PC-3 (cell line): ENCODE measurements at regions of chr20 and their contacts with region 1.

Region 1: GRCh38 chr20:5658912-5659345 is 91.3 kb upstream of the SHLD1 start:
- DNase-seq: peak; percentile 12
- ATAC-seq: no peak
- H3K4me3 ChIP-seq: no peak overlapping the region
- H3K27ac ChIP-seq: no peak overlapping the region
- H3K4me1 ChIP-seq: peaks cover 36% of the 10 kb centered on the region
- H3K27me3 ChIP-seq: no peaks in the 10 kb centered on the region
- CTCF ChIP-seq: no peak

Region 2: GRCh38 chr20:5630071-5630470 is 28.9 kb before region 1 on chr20:
- CTCF ChIA-PET with region 1: no interaction called
- POLR2A ChIA-PET with region 1: interaction called, 13 read pairs
- intact Hi-C with region 1: no loop called
- DNase-seq: no peak
- ATAC-seq: no peak
- H3K4me3 ChIP-seq: no peak overlapping the region
- H3K27ac ChIP-seq: no peak overlapping the region
- H3K4me1 ChIP-seq: peaks cover 9% of the 10 kb centered on the region; the same call in 1 of the 2 replicates
- H3K27me3 ChIP-seq: no peaks in the 10 kb centered on the region
- CTCF ChIP-seq: no peak

Region 3: GRCh38 chr20:5674176-5674660 is 15.3 kb after region 1 on chr20:
- CTCF ChIA-PET with region 1: no interaction called
- POLR2A ChIA-PET with region 1: no interaction called
- intact Hi-C with region 1: loop called (anchors 1 kb)
- DNase-seq: peak; percentile 97
- ATAC-seq: peak; percentile 98
- H3K4me3 ChIP-seq: no peak overlapping the region
- H3K27ac ChIP-seq: peak overlapping the region; percentile 27
- H3K4me1 ChIP-seq: peaks cover 19% of the 10 kb centered on the region
- H3K27me3 ChIP-seq: no peaks in the 10 kb centered on the region
- CTCF ChIP-seq: no peak

Region 4: DNA sequence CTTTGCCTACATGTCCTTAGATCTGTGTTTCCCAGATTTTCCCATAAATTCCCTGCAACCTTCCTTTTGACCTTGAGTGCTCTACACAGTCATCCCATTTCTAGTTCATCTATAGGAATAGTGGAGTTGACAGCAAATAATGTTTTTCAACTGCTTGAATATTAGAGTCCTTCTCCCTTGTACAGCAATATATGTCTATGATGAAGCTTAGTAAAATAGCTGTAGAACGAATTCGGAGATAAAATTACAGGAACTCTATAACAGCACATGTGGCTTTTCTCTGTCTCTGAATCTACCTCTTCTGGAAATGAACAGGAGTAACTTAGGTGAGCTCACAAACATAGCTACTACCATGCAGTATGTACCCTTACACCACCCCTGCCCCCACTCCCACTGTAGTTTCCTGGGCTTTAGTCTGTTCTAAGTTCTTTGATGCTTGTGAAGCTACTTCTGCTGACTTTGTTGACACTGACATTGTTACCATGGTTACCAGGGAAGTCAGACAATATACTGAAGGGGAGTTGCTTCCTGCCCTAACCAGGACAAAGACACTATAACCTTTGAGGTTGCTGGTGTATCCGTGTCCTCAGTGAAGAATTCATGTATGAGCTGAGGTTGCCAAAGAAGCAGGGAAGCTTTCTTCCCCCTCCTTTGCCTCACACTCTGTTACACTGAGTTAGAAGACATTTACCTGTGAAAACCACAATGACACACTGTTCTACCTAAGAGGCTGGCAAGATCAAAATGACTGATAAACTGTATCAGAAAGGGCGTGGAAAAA is 55.5 kb after region 1 on chr20:
- CTCF ChIA-PET with region 1: no interaction called
- POLR2A ChIA-PET with region 1: no interaction called
- intact Hi-C with region 1: no loop called
- DNase-seq: peak; percentile 76
- ATAC-seq: peak; percentile 86
- H3K4me3 ChIP-seq: no peak overlapping the region
- H3K27ac ChIP-seq: peak overlapping the region; percentile 68
- H3K4me1 ChIP-seq: peaks cover 26% of the 10 kb centered on the region
- H3K27me3 ChIP-seq: no peaks in the 10 kb centered on the region
- CTCF ChIP-seq: no peak

Region 5: GRCh38 chr20:5729348-5729747 is 70.4 kb after region 1 on chr20:
- CTCF ChIA-PET with region 1: no interaction called
- POLR2A ChIA-PET with region 1: interaction called, 16 read pairs
- intact Hi-C with region 1: loop called (anchors 5 kb)
- DNase-seq: peak; percentile 50
- ATAC-seq: peak; percentile 59
- H3K4me3 ChIP-seq: no peak overlapping the region
- H3K27ac ChIP-seq: peak overlapping the region; percentile 28
- H3K4me1 ChIP-seq: peaks cover 27% of the 10 kb centered on the region
- H3K27me3 ChIP-seq: no peaks in the 10 kb centered on the region
- CTCF ChIP-seq: no peak